K562 (cell line): ENCODE measurements at regions of chr7 and their contacts with region 1.

Region 1: GRCh38 chr7:125195156-125195555 is 265.5 kb upstream of the POT1 start:
- DNase-seq: no peak
- ATAC-seq: no peak
- H3K4me3 ChIP-seq: no peak overlapping the region
- H3K27ac ChIP-seq: no peak overlapping the region
- H3K4me1 ChIP-seq: no peaks in the 10 kb centered on the region
- H3K27me3 ChIP-seq: no peaks in the 10 kb centered on the region
- CTCF ChIP-seq: no peak
- EP300 ChIP-seq: no peak
- POLR2A ChIP-seq: no peak
- RAD21 ChIP-seq: no peak

Region 2: DNA sequence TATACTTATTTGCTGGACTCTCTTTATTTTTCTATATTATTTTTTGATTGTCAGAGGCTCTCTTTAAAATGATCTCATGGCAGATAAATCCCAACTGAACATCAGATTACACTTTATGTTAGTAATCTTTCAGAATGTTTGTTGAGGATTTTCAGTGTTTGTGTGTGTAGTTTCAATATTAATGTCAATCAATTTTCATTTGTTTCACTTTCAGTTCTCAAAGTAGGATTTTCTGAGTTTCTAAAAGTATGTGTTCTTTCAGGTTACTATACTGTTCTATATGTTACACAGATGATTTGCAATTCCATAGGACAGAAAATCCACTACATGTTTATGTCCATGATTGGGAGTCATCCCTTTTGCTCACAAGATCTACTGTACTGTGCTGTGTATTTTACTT is 46.4 kb after region 1 on chr7:
- CTCF ChIA-PET with region 1: no interaction called
- POLR2A ChIA-PET with region 1: no interaction called
- in situ Hi-C with region 1: no loop called
- intact Hi-C with region 1: no loop called
- DNase-seq: no peak
- ATAC-seq: no peak
- H3K4me3 ChIP-seq: no peak overlapping the region
- H3K27ac ChIP-seq: no peak overlapping the region
- H3K4me1 ChIP-seq: no peaks in the 10 kb centered on the region
- H3K27me3 ChIP-seq: no peaks in the 10 kb centered on the region
- CTCF ChIP-seq: no peak
- EP300 ChIP-seq: no peak
- POLR2A ChIP-seq: no peak
- RAD21 ChIP-seq: no peak

Region 3: DNA sequence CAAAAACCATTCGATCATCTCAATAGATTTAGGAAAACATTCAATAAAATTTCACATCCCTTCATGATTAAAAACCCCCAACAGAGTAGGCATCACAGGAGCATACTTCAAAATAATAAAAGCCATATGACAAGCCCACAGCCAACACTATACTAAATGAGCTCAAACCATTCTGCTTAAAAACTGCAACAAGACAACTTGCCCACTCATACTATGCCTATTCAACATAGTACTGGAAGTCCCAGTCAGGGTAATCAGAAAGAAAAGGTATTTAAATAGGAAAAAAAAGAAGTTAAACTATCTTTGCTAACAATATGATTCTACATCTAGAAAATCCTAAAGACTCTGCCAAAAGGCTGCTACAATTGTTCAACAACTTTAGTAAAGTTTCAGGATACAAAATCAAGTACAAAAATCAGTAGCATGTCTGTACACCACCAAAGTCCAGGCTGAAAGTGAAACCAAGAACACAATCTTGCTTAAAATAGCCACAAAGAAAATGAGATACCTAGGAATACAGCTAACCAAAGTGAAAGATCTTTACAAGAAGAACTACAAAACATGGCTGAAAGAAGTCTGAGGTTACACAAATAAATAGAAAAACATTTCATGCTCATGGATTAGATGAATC is 1175.0 kb after region 1 on chr7:
- CTCF ChIA-PET with region 1: no interaction called
- POLR2A ChIA-PET with region 1: no interaction called
- in situ Hi-C with region 1: no loop called
- intact Hi-C with region 1: loop called (anchors 5 kb)
- DNase-seq: no peak
- ATAC-seq: no peak
- H3K4me3 ChIP-seq: no peak overlapping the region
- H3K27ac ChIP-seq: no peak overlapping the region
- H3K4me1 ChIP-seq: no peaks in the 10 kb centered on the region
- H3K27me3 ChIP-seq: no peaks in the 10 kb centered on the region
- CTCF ChIP-seq: no peak
- EP300 ChIP-seq: no peak
- POLR2A ChIP-seq: no peak
- RAD21 ChIP-seq: no peak